Activated naive CD4-positive, alpha-beta T cell treated with anti-CD3 and anti-CD28 coated beads for 36 hours (primary cell): ENCODE measurements at regions of chr2 and their contacts with region 1.

Region 1: GRCh38 chr2:71923887-71924533 is 223.7 kb downstream of the CYP26B1 start:
- DNase-seq: peak; percentile 75
- H3K4me3 Mint-ChIP-seq: no peak overlapping the region
- H3K27ac Mint-ChIP-seq: no peak overlapping the region
- H3K4me1 Mint-ChIP-seq: no peaks in the 10 kb centered on the region
- H3K27me3 Mint-ChIP-seq: no peaks in the 10 kb centered on the region

Region 2: GRCh38 chr2:71379088-71379487 is 544.9 kb before region 1 on chr2:
- CTCF ChIA-PET with region 1: no interaction called
- intact Hi-C with region 1: no loop called
- DNase-seq: no peak
- H3K4me3 Mint-ChIP-seq: no peak overlapping the region
- H3K27ac Mint-ChIP-seq: peak overlapping the region; percentile 59
- H3K4me1 Mint-ChIP-seq: no peaks in the 10 kb centered on the region
- H3K27me3 Mint-ChIP-seq: no peaks in the 10 kb centered on the region

Region 3: DNA sequence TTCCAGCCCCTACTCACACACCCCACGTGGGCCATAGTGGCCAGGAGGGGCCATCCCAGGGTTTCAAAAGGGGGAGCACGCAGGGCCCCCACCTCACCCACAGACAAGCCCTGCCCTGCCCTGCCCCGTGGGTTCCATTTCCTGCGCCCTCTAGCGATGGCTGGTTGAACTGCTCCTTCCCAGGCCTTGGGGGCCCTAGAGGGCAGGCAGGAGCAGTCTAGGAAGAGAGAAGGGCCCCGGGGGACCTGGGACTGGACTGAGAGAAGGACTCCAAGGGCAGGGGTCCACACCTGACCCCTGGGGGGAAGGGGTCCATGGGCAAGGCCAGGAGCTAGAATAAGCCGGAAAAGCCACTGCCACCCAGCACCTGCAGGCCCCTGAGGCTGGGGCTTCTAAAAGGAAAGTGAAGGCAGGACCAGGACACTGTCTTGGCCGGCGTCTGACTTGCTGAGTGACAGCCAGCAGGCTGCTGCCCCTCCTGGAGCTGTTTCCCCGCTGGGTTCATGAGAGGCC is 213.5 kb after region 1 on chr2:
- CTCF ChIA-PET with region 1: no interaction called
- intact Hi-C with region 1: loop called (anchors 1 kb)
- DNase-seq: peak; percentile 76
- H3K4me3 Mint-ChIP-seq: no peak overlapping the region
- H3K27ac Mint-ChIP-seq: no peak overlapping the region
- H3K4me1 Mint-ChIP-seq: no peaks in the 10 kb centered on the region
- H3K27me3 Mint-ChIP-seq: peaks cover 16% of the 10 kb centered on the region

Region 4: GRCh38 chr2:72579591-72580180 is 655.7 kb after region 1 on chr2:
- CTCF ChIA-PET with region 1: interaction called, 4 read pairs
- intact Hi-C with region 1: loop called (anchors 1 kb)
- DNase-seq: no peak
- H3K4me3 Mint-ChIP-seq: no peak overlapping the region
- H3K27ac Mint-ChIP-seq: no peak overlapping the region
- H3K4me1 Mint-ChIP-seq: no peaks in the 10 kb centered on the region
- H3K27me3 Mint-ChIP-seq: no peaks in the 10 kb centered on the region

Region 5: DNA sequence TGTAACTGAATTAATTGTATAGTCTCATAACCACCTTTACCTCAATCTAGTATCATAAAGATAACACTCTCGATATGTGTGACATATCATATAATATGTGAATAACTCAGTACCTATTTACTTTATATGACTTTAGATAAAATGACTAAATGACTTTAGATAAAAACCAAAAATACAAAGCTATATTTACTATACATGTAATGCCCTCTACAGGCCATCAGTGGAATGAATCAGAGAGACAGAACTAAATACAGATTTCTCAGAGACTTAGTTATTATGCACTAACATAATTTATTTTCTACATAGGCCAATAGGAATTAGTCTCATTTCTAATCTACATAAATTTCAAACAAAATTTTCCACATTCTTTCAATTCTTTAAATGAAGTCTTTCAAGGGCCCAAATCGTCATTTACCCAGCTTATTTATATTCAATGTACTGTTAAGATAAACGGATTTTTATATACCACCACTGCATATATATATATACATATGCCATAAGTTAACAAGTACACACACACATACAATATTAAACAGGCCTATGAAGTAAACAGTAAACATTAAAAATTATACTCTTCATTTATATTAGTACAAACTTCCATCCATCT is 681.9 kb after region 1 on chr2:
- CTCF ChIA-PET with region 1: no interaction called
- intact Hi-C with region 1: loop called (anchors 1 kb)
- DNase-seq: no peak
- H3K4me3 Mint-ChIP-seq: no peak overlapping the region
- H3K27ac Mint-ChIP-seq: no peak overlapping the region
- H3K4me1 Mint-ChIP-seq: peaks cover 13% of the 10 kb centered on the region
- H3K27me3 Mint-ChIP-seq: no peaks in the 10 kb centered on the region

Region 6: GRCh38 chr2:72745679-72746368 is 821.8 kb after region 1 on chr2:
- CTCF ChIA-PET with region 1: interaction called, 5 read pairs
- intact Hi-C with region 1: loop called (anchors 1 kb)
- DNase-seq: no peak
- H3K4me3 Mint-ChIP-seq: no peak overlapping the region
- H3K27ac Mint-ChIP-seq: no peak overlapping the region
- H3K4me1 Mint-ChIP-seq: peaks cover 2% of the 10 kb centered on the region
- H3K27me3 Mint-ChIP-seq: no peaks in the 10 kb centered on the region